Activated T-helper 2 cell treated with anti-CD3 and anti-CD28 coated beads, Interferon-gamma antibody, Interleukin-2, Interleukin-4, amounts not matched to agents 10 μg/mL and 5 μg/mL and 100 μg/mL, durations not matched to agents 14 hours and 24 hours and 36 hours (primary cell): ENCODE measurements at regions of chr5 and their contacts with region 1.

Region 1: GRCh38 chr5:131289738-131290137 is 25.9 kb downstream of the CDC42SE2 start:
- DNase-seq: no peak
- H3K4me3 Mint-ChIP-seq: peak overlapping the region; percentile 68
- H3K27ac Mint-ChIP-seq: peak overlapping the region; percentile 84
- H3K4me1 Mint-ChIP-seq: peaks cover 48% of the 10 kb centered on the region
- H3K27me3 Mint-ChIP-seq: no peaks in the 10 kb centered on the region

Region 2: GRCh38 chr5:131242728-131243255 is 46.9 kb before region 1 on chr5:
- intact Hi-C with region 1: no loop called
- DNase-seq: no peak
- H3K4me3 Mint-ChIP-seq: no peak overlapping the region
- H3K27ac Mint-ChIP-seq: no peak overlapping the region
- H3K4me1 Mint-ChIP-seq: peaks cover 9% of the 10 kb centered on the region
- H3K27me3 Mint-ChIP-seq: no peaks in the 10 kb centered on the region

Region 3: GRCh38 chr5:131322926-131323325 is 33.2 kb after region 1 on chr5:
- intact Hi-C with region 1: loop called (anchors 1 kb)
- DNase-seq: no peak
- H3K4me3 Mint-ChIP-seq: no peak overlapping the region
- H3K27ac Mint-ChIP-seq: peak overlapping the region; percentile 11
- H3K4me1 Mint-ChIP-seq: peaks cover 40% of the 10 kb centered on the region
- H3K27me3 Mint-ChIP-seq: no peaks in the 10 kb centered on the region

Region 4: GRCh38 chr5:131328536-131329285 is 39.0 kb after region 1 on chr5:
- intact Hi-C with region 1: loop called (anchors 1 kb)
- DNase-seq: no peak
- H3K4me3 Mint-ChIP-seq: no peak overlapping the region
- H3K27ac Mint-ChIP-seq: peak overlapping the region; percentile 84
- H3K4me1 Mint-ChIP-seq: peaks cover 36% of the 10 kb centered on the region
- H3K27me3 Mint-ChIP-seq: no peaks in the 10 kb centered on the region